Heart left ventricle (tissue), 16 donors: ENCODE measurements at regions of chrX and their contacts with region 1.

Region 1: DNA sequence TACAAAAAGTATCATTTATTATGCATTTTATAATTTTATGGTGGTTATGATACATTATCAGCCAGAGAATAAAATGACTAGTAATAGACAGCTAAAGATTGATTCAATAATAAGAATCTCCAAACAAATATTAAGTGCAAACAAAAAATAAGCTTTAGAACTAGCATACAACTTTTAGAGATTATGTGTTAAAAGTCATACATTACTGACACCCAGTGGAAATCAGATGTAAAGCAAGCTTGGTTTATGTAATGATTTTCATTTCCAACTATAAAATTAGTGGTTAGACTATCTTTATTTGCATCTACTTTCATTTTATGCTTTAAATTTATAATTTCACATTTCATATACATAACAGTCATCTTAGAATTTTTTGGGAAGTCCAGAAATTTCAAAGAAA is 57.7 kb downstream of the IL13RA2 start:
- DNase-seq: no peak
- ATAC-seq: no peak
- H3K4me3 ChIP-seq: no peak overlapping the region
- H3K27ac ChIP-seq: no peak overlapping the region
- H3K4me1 ChIP-seq: no peaks in the 10 kb centered on the region
- H3K27me3 ChIP-seq: peaks cover 0 to 5% (median 0%) of the 10 kb centered on the region in 9 donors
- CTCF ChIP-seq: peak; percentile 18 to 57 (median 44)
- POLR2A ChIP-seq: no peak

Region 2: GRCh38 chrX:114611018-114611619 is 348.6 kb before region 1 on chrX:
- intact Hi-C with region 1: loop called in 2 of 10 experiments (anchors 5 kb)
- DNase-seq: peak in 2 of 5 donors; percentile 4 to 15
- ATAC-seq: no peak
- H3K4me3 ChIP-seq: no peak overlapping the region
- H3K27ac ChIP-seq: no peak overlapping the region
- H3K4me1 ChIP-seq: no peaks in the 10 kb centered on the region
- H3K27me3 ChIP-seq: peaks cover 0 to 17% (median 0%) of the 10 kb centered on the region in 9 donors
- CTCF ChIP-seq: peak; percentile 54 to 90 (median 68)
- POLR2A ChIP-seq: no peak

Region 3: DNA sequence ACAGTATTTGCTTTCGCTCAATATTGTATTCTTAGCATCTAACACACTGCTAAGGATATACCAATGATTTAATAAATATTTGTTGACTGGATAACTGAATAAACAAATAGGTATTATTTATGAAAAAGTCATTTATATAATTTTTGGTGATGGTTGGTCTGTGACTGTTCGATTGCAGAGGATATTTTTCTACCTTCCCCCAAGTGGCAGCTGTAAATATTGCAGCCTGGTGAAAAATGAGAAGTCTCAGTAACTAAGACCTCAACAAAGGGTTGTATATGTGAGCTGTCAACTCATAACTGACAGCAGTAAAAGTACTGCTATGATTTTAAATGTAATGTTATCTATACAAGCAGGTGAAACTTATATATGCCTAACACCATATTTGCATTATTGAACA is 339.9 kb before region 1 on chrX:
- intact Hi-C with region 1: loop called in 9 of 10 experiments (anchors 5 to 10 kb)
- DNase-seq: no peak
- ATAC-seq: no peak
- H3K4me3 ChIP-seq: no peak overlapping the region
- H3K27ac ChIP-seq: no peak overlapping the region
- H3K4me1 ChIP-seq: no peaks in the 10 kb centered on the region
- H3K27me3 ChIP-seq: peaks cover 0 to 12% (median 0%) of the 10 kb centered on the region in 9 donors
- CTCF ChIP-seq: peak in 9 of 12 donors; percentile 15 to 48 (median 32)
- POLR2A ChIP-seq: no peak

Region 4: GRCh38 chrX:114626323-114626722 is 333.4 kb before region 1 on chrX:
- intact Hi-C with region 1: loop called (anchors 2 to 10 kb)
- DNase-seq: no peak
- ATAC-seq: no peak
- H3K4me3 ChIP-seq: no peak overlapping the region
- H3K27ac ChIP-seq: no peak overlapping the region
- H3K4me1 ChIP-seq: no peaks in the 10 kb centered on the region
- H3K27me3 ChIP-seq: peaks cover 0 to 26% (median 0%) of the 10 kb centered on the region in 9 donors
- CTCF ChIP-seq: peak in 9 of 12 donors; percentile 12 to 47 (median 37)
- POLR2A ChIP-seq: no peak

Region 5: GRCh38 chrX:114774691-114775090 is 185.0 kb before region 1 on chrX:
- intact Hi-C with region 1: loop called in 1 of 10 experiments (anchors 10 kb)
- DNase-seq: no peak
- ATAC-seq: no peak
- H3K4me3 ChIP-seq: no peak overlapping the region
- H3K27ac ChIP-seq: no peak overlapping the region
- H3K4me1 ChIP-seq: no peaks in the 10 kb centered on the region
- H3K27me3 ChIP-seq: peaks cover 0 to 3% (median 0%) of the 10 kb centered on the region in 9 donors
- CTCF ChIP-seq: peak in 3 of 12 donors; percentile 10 to 16 (median 11)
- POLR2A ChIP-seq: no peak